ENCODE measurements at regions of chr20 and their contacts with region 1.

Region 1: GRCh38 chr20:8722276-8722928 is 346.5 kb upstream of the PLCB4 start:
- DNase-seq: no peak
- H3K4me3 ChIP-seq: no peak overlapping the region
- H3K27me3 ChIP-seq: no peaks in the 10 kb centered on the region
- CTCF ChIP-seq: peak; percentile 76

Region 2: DNA sequence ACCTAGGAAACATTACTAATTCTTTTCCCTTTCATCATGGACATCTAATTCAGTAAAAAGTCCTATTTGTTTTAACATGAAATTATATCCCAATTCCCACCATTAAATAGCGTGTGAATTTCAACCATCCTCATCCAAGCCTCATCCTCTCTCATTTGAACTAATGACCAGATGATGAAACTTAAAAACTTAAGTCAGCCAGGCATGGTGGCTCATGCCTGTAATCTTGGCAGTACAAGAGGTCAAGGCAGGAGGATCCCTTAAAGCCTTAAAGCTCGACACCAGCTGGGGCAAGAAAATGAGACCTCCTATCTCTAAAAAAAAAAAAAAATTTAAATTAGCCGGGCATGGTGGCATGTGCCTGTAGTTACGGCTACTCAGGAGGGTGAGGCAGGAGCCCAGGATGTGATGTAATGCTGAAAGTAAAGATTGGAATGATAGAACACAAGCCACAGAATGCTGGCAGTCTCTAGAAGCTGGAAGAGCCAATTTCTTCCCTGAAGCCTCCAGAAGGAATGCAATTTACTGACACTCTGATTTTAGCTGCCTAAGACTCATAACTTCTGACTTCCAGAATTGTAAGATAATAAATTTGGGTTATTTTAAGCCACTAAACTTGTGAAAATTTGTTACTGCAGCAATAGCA is 755.1 kb before region 1 on chr20:
- CTCF ChIA-PET with region 1: interaction called, 12 read pairs
- POLR2A ChIA-PET with region 1: no interaction called
- DNase-seq: peak; percentile 66
- H3K4me3 ChIP-seq: no peak overlapping the region
- H3K27me3 ChIP-seq: no peaks in the 10 kb centered on the region
- CTCF ChIP-seq: no peak

Region 3: GRCh38 chr20:8049310-8049709 is 673.1 kb before region 1 on chr20:
- CTCF ChIA-PET with region 1: interaction called, 183 read pairs
- POLR2A ChIA-PET with region 1: no interaction called
- DNase-seq: no peak
- H3K4me3 ChIP-seq: no peak overlapping the region
- H3K27me3 ChIP-seq: no peaks in the 10 kb centered on the region; the same call in 1 of the 2 replicates
- CTCF ChIP-seq: no peak

Region 4: DNA sequence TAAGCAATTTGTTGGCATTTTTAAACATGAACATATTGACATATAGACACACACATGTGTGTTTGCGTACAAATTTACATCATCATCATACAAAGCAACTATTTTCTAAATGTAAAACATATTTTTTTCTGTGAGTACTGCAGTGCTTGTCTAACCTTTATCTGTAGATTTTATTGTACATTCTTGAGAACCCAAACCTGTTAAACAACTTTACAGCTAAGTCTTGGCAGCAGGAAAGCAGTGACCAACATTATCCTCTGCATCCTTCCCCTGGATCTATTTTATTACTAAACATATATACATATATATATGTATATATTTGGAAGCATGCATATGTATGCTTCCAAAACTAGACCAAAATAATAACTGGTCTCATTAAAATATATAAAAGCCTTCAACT is 600.7 kb before region 1 on chr20:
- CTCF ChIA-PET with region 1: interaction called, 80 read pairs
- POLR2A ChIA-PET with region 1: interaction called, 3 read pairs
- DNase-seq: no peak
- H3K4me3 ChIP-seq: no peak overlapping the region
- H3K27me3 ChIP-seq: no peaks in the 10 kb centered on the region
- CTCF ChIP-seq: no peak

Region 5: GRCh38 chr20:8389381-8390036 is 332.9 kb before region 1 on chr20:
- CTCF ChIA-PET with region 1: interaction called, 36 read pairs
- POLR2A ChIA-PET with region 1: no interaction called
- DNase-seq: no peak
- H3K4me3 ChIP-seq: no peak overlapping the region
- H3K27me3 ChIP-seq: no peaks in the 10 kb centered on the region
- CTCF ChIP-seq: peak; percentile 38

Region 6: GRCh38 chr20:8583566-8584043 is 138.8 kb before region 1 on chr20:
- CTCF ChIA-PET with region 1: no interaction called
- POLR2A ChIA-PET with region 1: no interaction called
- DNase-seq: peak; percentile 47
- H3K4me3 ChIP-seq: no peak overlapping the region
- H3K27me3 ChIP-seq: no peaks in the 10 kb centered on the region
- CTCF ChIP-seq: no peak

Region 7: DNA sequence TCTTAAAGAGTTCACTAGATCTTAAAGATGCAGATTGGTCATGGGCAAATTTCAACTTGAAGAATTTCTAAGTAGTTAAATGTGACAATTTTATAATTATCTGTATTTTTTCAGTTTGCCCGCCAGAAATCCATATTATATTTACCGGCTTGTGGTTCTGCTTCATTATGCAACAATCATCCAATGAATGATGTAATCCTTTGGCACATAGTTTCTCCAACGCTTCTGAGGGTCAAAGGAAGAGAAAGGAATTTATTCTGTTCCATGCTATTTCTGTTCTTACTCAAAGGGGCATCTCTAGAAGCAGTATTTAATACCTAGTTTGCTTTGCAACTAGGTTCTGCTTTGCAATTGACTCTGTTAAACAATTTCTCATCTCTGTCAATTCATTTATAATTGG is 12.8 kb before region 1 on chr20:
- CTCF ChIA-PET with region 1: interaction called, 34 read pairs
- POLR2A ChIA-PET with region 1: no interaction called
- DNase-seq: no peak
- H3K4me3 ChIP-seq: no peak overlapping the region
- H3K27me3 ChIP-seq: no peaks in the 10 kb centered on the region
- CTCF ChIP-seq: no peak